Activated CD4-positive, alpha-beta memory T cell treated with anti-CD3 and anti-CD28 coated beads for 36 hours (primary cell): ENCODE measurements at regions of chrX and their contacts with region 1.

Region 1: GRCh38 chrX:13123857-13124345 is 79.5 kb upstream of the FAM9C start:
- DNase-seq: no peak
- H3K4me3 Mint-ChIP-seq: peak overlapping the region; percentile 26
- H3K27ac Mint-ChIP-seq: peak overlapping the region; percentile 61
- H3K4me1 Mint-ChIP-seq: peaks cover 38% of the 10 kb centered on the region
- H3K27me3 Mint-ChIP-seq: no peaks in the 10 kb centered on the region

Region 2: GRCh38 chrX:13110433-13111324 is 13.2 kb before region 1 on chrX:
- CTCF ChIA-PET with region 1: no interaction called
- POLR2A ChIA-PET with region 1: no interaction called
- intact Hi-C with region 1: loop called (anchors 1 kb)
- DNase-seq: no peak
- H3K4me3 Mint-ChIP-seq: no peak overlapping the region
- H3K27ac Mint-ChIP-seq: no peak overlapping the region
- H3K4me1 Mint-ChIP-seq: peaks cover 11% of the 10 kb centered on the region
- H3K27me3 Mint-ChIP-seq: no peaks in the 10 kb centered on the region

Region 3: DNA sequence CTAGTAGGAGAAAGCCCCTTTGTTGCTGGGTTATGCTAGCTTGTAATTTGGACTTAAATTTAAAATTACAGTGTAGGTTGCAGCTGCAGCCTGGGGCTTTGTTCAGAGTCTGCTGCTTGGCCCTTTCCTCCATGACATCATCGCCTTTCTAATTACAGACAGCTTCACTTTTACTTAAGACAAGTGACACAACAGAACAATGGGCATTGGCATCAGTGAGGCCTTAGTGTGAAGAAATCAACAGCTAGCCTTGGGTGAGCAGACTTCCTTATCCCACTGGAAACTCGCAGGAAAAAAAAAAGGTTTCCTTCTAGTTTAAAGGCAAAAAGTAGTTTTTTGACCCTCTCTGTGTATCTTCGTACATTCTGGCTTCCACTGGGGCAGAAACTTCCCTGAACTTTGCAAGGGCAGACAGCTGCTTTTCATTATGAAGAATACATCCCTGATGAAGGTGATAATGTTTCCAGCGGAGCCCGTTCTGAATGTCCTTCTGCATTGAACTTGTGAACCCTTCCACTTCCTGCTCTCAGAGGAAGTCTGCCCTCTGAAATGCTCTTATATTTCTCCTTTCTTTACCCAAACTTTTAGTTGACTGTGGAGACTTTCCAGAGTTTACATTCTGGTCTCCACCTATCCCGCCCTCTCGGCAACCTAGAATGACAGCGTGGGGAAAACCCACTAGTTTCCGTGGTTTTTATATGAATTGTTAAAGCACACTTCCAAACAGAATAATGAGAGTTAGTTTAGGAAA is 43.8 kb after region 1 on chrX:
- CTCF ChIA-PET with region 1: no interaction called
- POLR2A ChIA-PET with region 1: no interaction called
- intact Hi-C with region 1: loop called (anchors 2 kb)
- DNase-seq: peak; percentile 34
- H3K4me3 Mint-ChIP-seq: peak overlapping the region; percentile 30
- H3K27ac Mint-ChIP-seq: peak overlapping the region; percentile 65
- H3K4me1 Mint-ChIP-seq: peaks cover 19% of the 10 kb centered on the region
- H3K27me3 Mint-ChIP-seq: no peaks in the 10 kb centered on the region

Region 4: DNA sequence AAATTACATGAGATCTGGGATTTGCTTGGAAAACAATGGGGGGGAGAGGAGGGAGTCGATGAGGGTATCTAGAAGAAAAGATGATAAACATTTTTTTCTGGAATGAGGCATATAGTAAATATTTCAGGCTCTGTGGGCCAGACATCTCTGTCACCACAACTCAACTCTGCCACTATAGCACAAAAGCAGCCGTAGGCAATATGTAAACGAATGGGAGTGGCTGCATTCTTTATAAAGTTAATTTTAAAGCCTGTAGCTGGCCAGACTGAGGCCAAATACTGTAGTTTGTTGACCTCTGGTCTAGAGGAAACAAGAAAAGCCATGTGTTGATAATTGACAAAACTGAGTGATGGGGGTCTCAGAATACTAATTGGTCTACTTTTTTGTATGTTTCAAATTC is 514.9 kb after region 1 on chrX:
- CTCF ChIA-PET with region 1: no interaction called
- POLR2A ChIA-PET with region 1: no interaction called
- intact Hi-C with region 1: no loop called
- DNase-seq: no peak
- H3K4me3 Mint-ChIP-seq: no peak overlapping the region
- H3K27ac Mint-ChIP-seq: no peak overlapping the region
- H3K4me1 Mint-ChIP-seq: no peaks in the 10 kb centered on the region
- H3K27me3 Mint-ChIP-seq: no peaks in the 10 kb centered on the region